PC-9 (cell line): ENCODE measurements at regions of chrX and their contacts with region 1.

Region 1: DNA sequence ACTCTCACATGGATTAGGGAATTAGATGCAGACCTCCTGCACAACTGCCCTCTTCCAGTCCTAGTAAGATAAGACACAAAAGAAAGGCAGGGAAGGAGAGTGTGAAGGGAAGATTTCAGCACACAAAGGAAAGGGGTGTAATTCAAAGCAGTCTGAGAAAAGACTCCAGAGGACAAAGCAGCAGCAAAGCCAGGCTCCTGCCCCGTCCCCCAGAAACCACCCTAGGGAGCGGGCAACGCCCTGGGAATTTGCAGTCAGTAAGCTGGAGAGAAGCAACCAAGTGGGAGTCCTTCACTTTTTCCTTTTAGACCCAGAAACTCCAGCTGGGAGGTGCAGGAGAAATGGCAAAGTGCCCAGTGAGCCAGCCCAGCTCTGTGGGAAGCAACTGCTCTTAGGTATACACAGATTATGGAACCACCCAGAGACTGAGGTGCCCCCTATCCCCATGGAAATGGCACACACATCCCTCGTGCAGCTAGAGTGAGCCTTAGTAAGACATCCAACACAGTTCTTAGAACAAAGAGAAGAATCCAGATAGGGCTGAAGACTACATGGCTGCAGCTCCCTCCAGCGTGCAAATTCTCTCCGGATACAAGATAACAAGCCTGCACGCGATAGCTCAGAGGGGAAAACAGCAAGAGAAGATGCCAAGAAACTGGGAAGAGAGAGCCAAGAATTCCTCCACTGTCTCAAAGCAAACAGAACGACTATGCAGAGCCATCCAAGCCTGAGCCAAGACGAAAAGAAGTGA is 26.5 kb upstream of the IRAK1 start:
- DNase-seq: no peak
- H3K4me3 ChIP-seq: no peak overlapping the region
- H3K27ac ChIP-seq: no peak overlapping the region
- H3K4me1 ChIP-seq: no peaks in the 10 kb centered on the region
- H3K27me3 ChIP-seq: no peaks in the 10 kb centered on the region
- CTCF ChIP-seq: no peak

Region 2: DNA sequence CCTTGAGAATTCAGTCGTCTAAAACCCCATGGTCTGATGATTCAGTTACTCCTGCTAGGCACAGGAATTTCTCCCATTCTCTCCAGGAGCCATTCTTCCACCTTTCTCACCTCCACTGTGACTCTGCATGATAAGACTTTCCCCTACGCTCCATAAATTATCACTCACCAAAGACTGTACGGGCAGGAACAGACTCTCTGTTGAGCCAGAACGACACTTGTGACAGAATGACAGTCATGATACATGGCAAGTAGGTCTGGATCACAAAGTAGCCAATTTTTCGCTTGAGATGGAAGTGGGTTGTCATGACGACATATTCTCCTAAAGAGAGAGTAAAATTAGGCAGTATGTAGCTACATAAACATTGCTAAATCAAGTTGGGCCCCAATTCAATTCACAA is 1848.7 kb before region 1 on chrX:
- CTCF ChIA-PET with region 1: no interaction called
- POLR2A ChIA-PET with region 1: interaction called, 11 read pairs
- intact Hi-C with region 1: no loop called
- DNase-seq: no peak
- H3K4me3 ChIP-seq: no peak overlapping the region
- H3K27ac ChIP-seq: no peak overlapping the region
- H3K4me1 ChIP-seq: no peaks in the 10 kb centered on the region
- H3K27me3 ChIP-seq: no peaks in the 10 kb centered on the region
- CTCF ChIP-seq: no peak

Region 3: DNA sequence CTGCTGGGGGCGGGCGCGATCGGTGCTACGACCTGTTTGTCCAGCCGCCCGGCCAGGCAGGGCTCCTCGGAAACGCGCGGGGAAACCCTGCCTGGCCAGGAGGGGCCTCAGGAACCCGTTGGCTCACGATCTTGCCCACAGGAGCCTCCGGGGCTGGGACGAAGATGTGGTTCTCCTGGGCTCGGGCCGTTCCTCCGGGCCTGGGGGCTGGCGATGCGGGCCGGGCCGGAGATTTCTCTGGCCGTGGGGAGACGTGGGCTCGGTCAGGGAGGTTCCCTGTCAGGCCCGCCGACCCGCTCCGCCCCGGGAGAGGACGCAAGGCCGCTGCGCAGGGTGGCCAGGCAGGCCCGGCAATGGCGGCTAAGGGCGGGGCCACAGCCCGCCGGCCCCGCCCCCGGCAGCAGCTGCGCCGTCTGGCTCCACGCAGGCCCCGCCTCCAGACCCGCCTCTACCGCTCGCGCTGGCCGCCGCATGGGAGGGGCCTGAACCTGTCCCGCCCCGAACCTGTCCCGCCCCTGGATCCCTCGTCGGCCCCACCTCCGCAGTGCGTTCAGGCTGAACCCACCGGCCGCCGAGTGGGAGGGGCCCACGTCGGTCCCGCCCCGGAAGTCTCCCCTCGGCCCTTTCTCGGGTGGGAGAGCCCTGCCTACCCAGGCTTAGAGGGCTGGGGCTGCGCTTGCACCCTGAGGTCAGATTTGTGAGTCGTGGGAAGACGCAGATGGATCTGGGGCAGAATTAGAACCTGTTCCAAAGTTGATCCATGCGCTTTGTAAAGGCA is 469.9 kb after region 1 on chrX and contains the start of gene FAM3A:
- CTCF ChIA-PET with region 1: no interaction called
- POLR2A ChIA-PET with region 1: no interaction called
- intact Hi-C with region 1: no loop called
- DNase-seq: peak; percentile 61 to 97
- H3K4me3 ChIP-seq: peak within 1 kb of the TSS; percentile 72
- H3K27ac ChIP-seq: peak within 1 kb of the TSS; percentile 46
- H3K4me1 ChIP-seq: no peaks in the 10 kb centered on the region
- H3K27me3 ChIP-seq: no peaks in the 10 kb centered on the region
- CTCF ChIP-seq: no peak
- total RNA-seq, gene FAM3A: 60.3 and 69.3 TPM in 2 replicates